Heart left ventricle (tissue), 16 donors: ENCODE measurements at regions of chr13 and their contacts with region 1.

Region 1: GRCh38 chr13:27379694-27380641 is 44.5 kb upstream of the GTF3A start:
- DNase-seq: peak in 3 of 5 donors; percentile 20 to 49 (median 41)
- ATAC-seq: peak in 3 of 4 donors; percentile 33 to 68 (median 34)
- H3K4me3 ChIP-seq: no peak overlapping the region
- H3K27ac ChIP-seq: no peak overlapping the region
- H3K4me1 ChIP-seq: peaks cover 0 to 5% (median 0%) of the 10 kb centered on the region in 12 donors
- H3K27me3 ChIP-seq: peaks cover 0 to 19% (median 0%) of the 10 kb centered on the region in 9 donors
- CTCF ChIP-seq: peak; percentile 22 to 63 (median 49)
- POLR2A ChIP-seq: no peak

Region 2: DNA sequence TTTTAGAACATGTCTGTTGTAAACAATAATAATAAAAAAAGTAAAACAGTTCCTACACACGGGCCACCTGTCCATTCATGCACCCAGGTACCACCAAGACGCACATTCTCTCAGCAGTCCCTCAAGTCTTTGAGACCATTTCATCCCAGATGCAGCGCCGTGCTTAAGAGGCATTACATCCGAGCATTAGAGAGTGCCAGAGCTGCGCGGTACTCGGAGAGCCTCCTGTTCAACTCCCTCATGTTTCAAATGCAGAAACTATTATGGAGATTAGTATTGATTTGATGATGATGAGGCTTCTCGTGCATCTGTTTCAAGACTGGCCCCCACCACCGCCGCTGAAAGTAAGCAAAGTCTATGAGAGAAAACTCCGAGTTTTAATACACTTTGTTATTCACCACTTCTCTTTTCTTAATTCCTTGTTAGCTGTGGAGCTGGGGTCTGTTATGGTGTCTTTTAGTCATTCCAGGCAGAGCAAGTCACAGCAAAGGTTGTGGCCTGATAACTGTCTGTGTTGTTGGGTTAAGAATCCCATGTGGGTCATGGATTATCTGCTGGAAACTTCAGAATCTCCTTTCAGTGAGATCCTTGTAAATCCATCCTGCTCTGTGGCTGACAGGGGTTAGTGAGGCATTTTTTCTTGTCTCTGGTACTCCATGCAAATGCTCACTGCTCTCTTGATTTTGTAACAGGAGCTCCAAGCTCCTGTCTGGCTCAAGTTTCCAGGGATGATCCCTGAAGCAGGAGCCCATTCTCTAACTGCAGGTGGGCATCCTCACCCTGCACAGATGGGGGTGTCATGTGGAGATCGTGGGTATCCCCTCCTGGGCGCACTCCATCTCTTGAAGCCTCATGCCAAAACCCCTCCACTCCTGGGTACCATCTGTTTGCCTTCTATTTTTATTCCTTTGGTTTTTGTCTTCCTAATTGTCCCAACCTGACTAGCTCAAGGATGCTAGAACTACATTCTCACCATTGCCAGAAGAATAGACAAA is 145.3 kb after region 1 on chr13:
- intact Hi-C with region 1: loop called in 8 of 10 experiments (anchors 5 to 10 kb)
- DNase-seq: no peak
- ATAC-seq: no peak
- H3K4me3 ChIP-seq: no peak overlapping the region
- H3K27ac ChIP-seq: no peak overlapping the region
- H3K4me1 ChIP-seq: no peaks in the 10 kb centered on the region
- H3K27me3 ChIP-seq: peaks cover 0 to 12% (median 0%) of the 10 kb centered on the region in 9 donors
- CTCF ChIP-seq: no peak
- POLR2A ChIP-seq: no peak

Region 3: DNA sequence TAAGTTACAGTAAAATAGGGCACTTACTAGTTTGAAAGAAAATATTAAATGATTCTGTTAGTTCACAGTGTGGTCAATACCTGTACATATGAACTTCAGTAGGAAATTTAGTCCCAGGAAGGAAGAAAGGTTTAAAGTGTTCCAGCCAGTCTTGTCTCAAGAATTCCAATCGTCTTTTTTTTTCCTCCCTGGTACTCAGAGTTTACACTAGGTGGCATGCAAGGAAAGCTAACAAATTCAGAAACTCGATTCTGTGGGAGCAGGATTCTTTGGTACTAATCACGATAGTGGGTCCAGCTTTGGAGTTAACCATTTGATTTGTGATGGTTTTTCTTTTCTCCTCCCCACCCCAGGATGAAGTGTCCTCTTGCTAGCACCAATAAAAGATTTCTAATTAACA is 285.4 kb after region 1 on chr13:
- intact Hi-C with region 1: loop called in 1 of 10 experiments (anchors 10 kb)
- DNase-seq: no peak
- ATAC-seq: no peak
- H3K4me3 ChIP-seq: no peak overlapping the region
- H3K27ac ChIP-seq: no peak overlapping the region
- H3K4me1 ChIP-seq: peaks cover 0 to 31% (median 6%) of the 10 kb centered on the region in 12 donors
- H3K27me3 ChIP-seq: no peaks in the 10 kb centered on the region
- CTCF ChIP-seq: peak in 10 of 12 donors; percentile 9 to 45 (median 23)
- POLR2A ChIP-seq: no peak

Region 4: GRCh38 chr13:27704681-27705080 is 324.7 kb after region 1 on chr13:
- intact Hi-C with region 1: loop called in 1 of 10 experiments (anchors 5 kb)
- DNase-seq: no peak
- ATAC-seq: no peak
- H3K4me3 ChIP-seq: no peak overlapping the region
- H3K27ac ChIP-seq: no peak overlapping the region
- H3K4me1 ChIP-seq: no peaks in the 10 kb centered on the region
- H3K27me3 ChIP-seq: peaks cover 0 to 4% (median 0%) of the 10 kb centered on the region in 9 donors
- CTCF ChIP-seq: no peak
- POLR2A ChIP-seq: no peak

Region 5: DNA sequence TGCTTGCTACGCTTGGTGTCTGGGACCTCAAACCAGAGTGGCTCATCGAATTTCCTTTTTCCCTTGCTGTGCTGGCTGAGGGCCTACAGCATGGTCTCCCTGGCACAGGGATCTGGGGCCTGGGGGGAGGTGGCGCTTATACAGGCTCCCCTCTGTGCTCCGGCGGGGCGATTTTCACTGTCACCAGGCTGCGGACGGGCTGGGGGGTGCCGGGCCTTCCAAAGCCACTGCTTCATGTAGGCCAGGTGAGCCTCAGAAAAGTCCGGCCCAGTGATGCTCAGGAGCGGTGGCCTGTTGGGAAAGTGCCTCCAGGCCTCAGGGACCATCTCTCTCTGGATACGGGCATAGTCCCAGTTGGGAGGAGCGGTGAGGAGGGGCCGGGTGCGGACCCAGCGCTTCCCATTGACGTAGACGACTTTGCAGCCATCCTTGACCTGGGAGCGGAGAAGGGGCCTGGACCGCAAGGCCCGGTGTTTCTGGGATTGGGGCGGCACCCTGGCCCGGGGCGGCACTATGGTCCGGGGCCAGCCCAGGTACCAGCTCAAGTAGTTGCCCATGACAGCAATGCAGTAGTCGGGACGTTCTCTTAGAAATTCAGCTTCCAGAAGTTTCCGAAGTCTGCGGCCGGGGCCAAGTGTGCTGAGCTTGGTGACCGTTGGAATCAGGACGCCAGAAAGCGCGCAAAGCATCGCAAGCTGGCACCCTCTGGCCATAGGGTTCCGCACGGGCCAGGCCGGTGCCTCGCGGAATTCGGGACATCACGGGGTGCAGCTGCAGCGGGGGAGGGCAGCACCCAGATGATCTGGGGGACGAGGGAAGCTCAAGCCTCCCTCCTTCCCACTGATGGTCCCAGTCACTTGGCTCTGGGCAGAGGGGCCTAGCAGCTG is 1959.7 kb after region 1 on chr13:
- intact Hi-C with region 1: no loop called
- DNase-seq: no peak
- ATAC-seq: peak in 1 of 4 donors; percentile 22
- H3K4me3 ChIP-seq: no peak overlapping the region
- H3K27ac ChIP-seq: no peak overlapping the region
- H3K4me1 ChIP-seq: no peaks in the 10 kb centered on the region
- H3K27me3 ChIP-seq: no peaks in the 10 kb centered on the region
- CTCF ChIP-seq: no peak
- POLR2A ChIP-seq: no peak